Ascending aorta (tissue), 2 donors: ENCODE measurements at regions of chrX and their contacts with region 1.

Region 1: GRCh38 chrX:38768079-38768478 is 33.2 kb upstream of the MID1IP1 start:
- DNase-seq: no peak
- H3K4me3 ChIP-seq: no peak overlapping the region
- H3K27ac ChIP-seq: no peak overlapping the region
- H3K4me1 ChIP-seq: no peaks in the 10 kb centered on the region
- H3K27me3 ChIP-seq: no peaks in the 10 kb centered on the region
- CTCF ChIP-seq: peak in 1 of 3 experiments; percentile 46

Region 2: DNA sequence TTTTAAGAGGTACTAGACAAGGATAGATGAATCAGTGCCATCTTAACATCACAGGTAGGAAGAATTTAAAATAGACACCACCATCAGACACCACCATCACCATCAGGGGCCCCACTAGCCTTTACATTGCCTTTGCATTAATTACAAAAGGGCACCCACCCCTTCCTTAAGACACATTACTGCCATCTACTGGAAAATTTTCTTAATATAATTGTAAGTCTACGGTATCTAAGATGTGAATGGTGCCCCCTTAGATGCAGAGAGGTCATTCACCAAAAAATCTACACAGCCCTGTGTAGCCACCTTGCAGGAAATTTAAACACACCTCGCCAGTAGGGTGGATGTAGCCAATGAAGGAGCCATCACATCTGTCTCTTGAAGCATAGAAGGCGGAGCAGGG is 217.3 kb after region 1 on chrX:
- intact Hi-C with region 1: loop called (anchors 5 kb)
- DNase-seq: no peak
- H3K4me3 ChIP-seq: no peak overlapping the region
- H3K27ac ChIP-seq: no peak overlapping the region
- H3K4me1 ChIP-seq: no peaks in the 10 kb centered on the region
- H3K27me3 ChIP-seq: no peaks in the 10 kb centered on the region
- CTCF ChIP-seq: peak in 1 of 3 experiments; percentile 31

Region 3: DNA sequence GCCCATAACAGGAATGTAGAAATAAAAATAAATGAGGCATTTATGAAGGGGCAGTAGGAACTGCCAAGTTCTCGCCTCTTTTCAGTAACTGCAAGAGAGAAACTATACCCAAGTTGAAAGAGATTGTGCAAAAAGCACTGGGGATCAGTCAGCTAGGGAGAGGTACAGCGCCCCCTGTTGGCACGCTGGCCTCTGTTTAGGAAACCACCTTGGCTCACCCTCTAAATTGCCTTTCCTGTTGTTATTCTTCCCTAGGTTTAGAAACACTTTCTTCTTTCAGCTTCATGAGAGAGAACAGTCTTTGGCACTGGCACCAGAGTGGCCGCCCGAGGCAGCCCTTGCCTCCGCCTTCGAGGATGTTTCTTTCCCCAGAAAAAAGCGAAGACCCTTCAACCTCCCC is 381.7 kb after region 1 on chrX:
- intact Hi-C with region 1: loop called (anchors 2 kb)
- DNase-seq: peak in 1 of 2 donors; percentile 83
- H3K4me3 ChIP-seq: no peak overlapping the region
- H3K27ac ChIP-seq: no peak overlapping the region
- H3K4me1 ChIP-seq: no peaks in the 10 kb centered on the region
- H3K27me3 ChIP-seq: no peaks in the 10 kb centered on the region
- CTCF ChIP-seq: peak; percentile 59 to 70 (median 65)